ENCODE measurements at regions of chr12 and their contacts with region 1.

Region 1: GRCh38 chr12:120495723-120496412 is at the start of gene DYNLL1:
- DNase-seq: peak; percentile 98
- ATAC-seq: peak; percentile 98
- H3K4me3 Mint-ChIP-seq: peak within 1 kb of the TSS; percentile 91
- H3K27ac Mint-ChIP-seq: peak within 1 kb of the TSS; percentile 75
- H3K4me1 Mint-ChIP-seq: peaks cover 31% of the 10 kb centered on the region
- H3K27me3 Mint-ChIP-seq: no peaks in the 10 kb centered on the region
- total RNA-seq, gene DYNLL1: 166 to 169 TPM

Region 2: DNA sequence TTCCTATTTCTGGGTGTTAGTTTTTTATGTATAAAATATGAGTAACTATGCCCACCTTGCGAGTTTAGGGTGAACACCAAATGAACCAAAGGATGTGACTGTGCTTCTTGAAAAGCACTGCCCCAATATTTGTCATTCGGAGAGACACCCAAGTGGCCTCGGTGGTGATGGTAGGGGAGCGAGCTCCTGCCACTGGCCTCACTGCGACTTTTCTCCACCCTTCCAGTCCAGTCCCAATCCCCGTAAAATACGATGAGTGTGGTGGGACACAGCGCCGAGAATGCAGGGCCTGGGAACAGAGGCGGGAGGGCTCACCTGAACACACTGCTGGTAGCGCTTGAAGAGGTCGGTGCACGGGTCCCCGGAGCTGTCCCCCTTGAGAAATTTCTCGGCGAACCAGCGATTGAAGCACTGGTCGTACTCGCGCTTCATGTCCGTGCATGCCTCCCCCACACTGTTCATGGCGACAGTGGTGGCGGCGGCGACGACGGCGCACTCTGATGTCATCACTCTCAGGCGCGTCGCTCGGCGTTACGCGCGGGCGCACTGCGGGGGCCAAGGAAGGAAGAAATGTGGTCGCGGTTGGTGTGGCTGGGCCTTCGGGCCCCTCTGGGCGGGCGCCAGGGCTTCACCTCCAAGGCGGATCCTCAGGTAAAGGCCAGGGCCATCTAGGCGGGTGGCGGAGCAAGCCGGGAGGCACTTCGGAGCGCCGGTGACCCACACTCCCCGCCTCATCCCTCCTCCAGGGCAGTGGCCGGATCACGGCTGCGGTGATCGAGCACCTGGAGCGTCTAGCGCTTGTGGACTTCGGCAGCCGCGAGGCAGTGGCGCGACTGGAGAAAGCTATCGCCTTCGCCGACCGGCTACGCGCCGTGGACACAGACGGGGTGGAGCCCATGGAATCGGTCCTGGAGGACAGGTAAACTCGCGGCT is 49.7 kb before region 1 on chr12 and contains the starts of genes GATC and TRIAP1:
- CTCF ChIA-PET with region 1: interaction called, 4 read pairs
- POLR2A ChIA-PET with region 1: no interaction called
- intact Hi-C with region 1: loop called in 1 of 2 experiments (anchors 2 kb)
- DNase-seq: peak; percentile 93
- ATAC-seq: peak; percentile 95
- H3K4me3 Mint-ChIP-seq: peak within 1 kb of the TSS; percentile 98
- H3K27ac Mint-ChIP-seq: peak within 1 kb of the TSS; percentile 93
- H3K4me1 Mint-ChIP-seq: peaks cover 33% of the 10 kb centered on the region
- H3K27me3 Mint-ChIP-seq: no peaks in the 10 kb centered on the region
- total RNA-seq, gene GATC: 26.3 to 36.3 TPM
- total RNA-seq, gene TRIAP1: 20.9 to 36.0 TPM

Region 3: GRCh38 chr12:120528861-120529525 is 33.1 kb after region 1 on chr12 and contains the start of gene COQ5:
- CTCF ChIA-PET with region 1: interaction called, 5 read pairs
- POLR2A ChIA-PET with region 1: interaction called, 3 read pairs
- intact Hi-C with region 1: loop called (anchors 1 to 2 kb)
- DNase-seq: peak; percentile 93
- ATAC-seq: peak; percentile 93
- H3K4me3 Mint-ChIP-seq: peak within 1 kb of the TSS; percentile 99
- H3K27ac Mint-ChIP-seq: peak within 1 kb of the TSS; percentile 100
- H3K4me1 Mint-ChIP-seq: peaks cover 21% of the 10 kb centered on the region
- H3K27me3 Mint-ChIP-seq: no peaks in the 10 kb centered on the region
- total RNA-seq, gene COQ5: 31.3 to 32.6 TPM

Region 4: DNA sequence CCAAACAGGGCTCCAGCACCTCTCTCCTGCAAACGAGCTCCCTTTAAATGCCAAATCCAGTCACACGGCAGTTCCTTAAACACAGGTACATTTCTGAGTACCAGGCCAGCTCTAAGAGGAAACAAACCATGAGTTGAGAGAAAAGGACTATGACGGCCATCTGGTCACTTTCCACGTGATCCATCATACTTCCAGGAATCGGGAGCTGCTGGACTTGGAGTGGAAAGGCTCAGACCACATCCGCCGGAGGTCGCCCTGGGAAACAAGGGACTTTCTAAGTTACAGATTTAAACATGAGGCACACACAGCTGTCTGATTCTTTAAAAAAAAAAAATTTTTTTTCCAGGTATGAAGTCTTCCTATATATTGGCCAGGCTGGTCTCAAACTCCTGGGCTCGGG is 268.9 kb after region 1 on chr12:
- CTCF ChIA-PET with region 1: no interaction called
- POLR2A ChIA-PET with region 1: interaction called, 14 read pairs
- intact Hi-C with region 1: no loop called
- DNase-seq: no peak
- ATAC-seq: no peak
- H3K4me3 Mint-ChIP-seq: no peak overlapping the region
- H3K27ac Mint-ChIP-seq: no peak overlapping the region
- H3K4me1 Mint-ChIP-seq: peaks cover 16% of the 10 kb centered on the region
- H3K27me3 Mint-ChIP-seq: no peaks in the 10 kb centered on the region